Naive thymus-derived CD4-positive, alpha-beta T cell (primary cell): ENCODE measurements at regions of chr3 and their contacts with region 1.

Region 1: DNA sequence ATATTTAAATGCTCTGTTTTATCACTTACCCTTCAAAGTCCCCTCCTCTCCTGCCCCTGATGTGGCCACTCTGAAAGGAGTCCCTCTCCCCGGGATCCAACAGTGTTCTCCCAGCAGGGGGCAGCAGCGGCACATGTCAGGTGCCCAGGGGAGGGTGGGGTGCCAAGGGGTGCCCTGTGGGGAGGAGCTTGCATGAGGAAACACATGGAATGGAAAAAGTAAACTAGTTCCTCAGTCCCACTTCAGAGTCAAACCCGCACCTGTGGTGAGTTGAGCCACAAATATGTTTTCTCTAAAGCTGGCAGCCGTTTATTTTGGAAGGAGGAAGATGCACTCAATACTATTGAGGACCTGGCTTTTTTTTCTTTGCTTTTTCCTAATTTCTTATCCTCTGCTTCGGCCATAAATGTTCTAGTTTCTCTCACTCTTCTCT is 30.1 kb upstream of the NRROS start:
- DNase-seq: peak; percentile 78 to 93 (median 88)
- ATAC-seq: peak; percentile 96
- H3K4me3 ChIP-seq: no peak overlapping the region
- H3K4me3 Mint-ChIP-seq: peak overlapping the region; percentile 49 to 80 (median 74)
- H3K27ac ChIP-seq: peak overlapping the region; percentile 39
- H3K27ac Mint-ChIP-seq: peak overlapping the region; percentile 72 to 93 (median 88)
- H3K4me1 ChIP-seq: peaks cover 23 to 26% of the 10 kb centered on the region in 2 donors
- H3K4me1 Mint-ChIP-seq: peaks cover 28 to 50% (median 47%) of the 10 kb centered on the region in 7 donors
- H3K27me3 ChIP-seq: no peaks in the 10 kb centered on the region
- H3K27me3 Mint-ChIP-seq: peaks cover 0 to 5% (median 0%) of the 10 kb centered on the region in 5 donors

Region 2: GRCh38 chr3:196023947-196024346 is 585.4 kb before region 1 on chr3:
- CTCF ChIA-PET with region 1: no interaction called
- POLR2A ChIA-PET with region 1: no interaction called
- intact Hi-C with region 1: no loop called
- DNase-seq: no peak
- ATAC-seq: no peak
- H3K4me3 ChIP-seq: no peak overlapping the region
- H3K4me3 Mint-ChIP-seq: no peak overlapping the region
- H3K27ac ChIP-seq: no peak overlapping the region
- H3K27ac Mint-ChIP-seq: no peak overlapping the region
- H3K4me1 ChIP-seq: no peaks in the 10 kb centered on the region
- H3K4me1 Mint-ChIP-seq: no peaks in the 10 kb centered on the region
- H3K27me3 ChIP-seq: no peaks in the 10 kb centered on the region
- H3K27me3 Mint-ChIP-seq: peaks cover 0 to 19% (median 3%) of the 10 kb centered on the region in 5 donors

Region 3: DNA sequence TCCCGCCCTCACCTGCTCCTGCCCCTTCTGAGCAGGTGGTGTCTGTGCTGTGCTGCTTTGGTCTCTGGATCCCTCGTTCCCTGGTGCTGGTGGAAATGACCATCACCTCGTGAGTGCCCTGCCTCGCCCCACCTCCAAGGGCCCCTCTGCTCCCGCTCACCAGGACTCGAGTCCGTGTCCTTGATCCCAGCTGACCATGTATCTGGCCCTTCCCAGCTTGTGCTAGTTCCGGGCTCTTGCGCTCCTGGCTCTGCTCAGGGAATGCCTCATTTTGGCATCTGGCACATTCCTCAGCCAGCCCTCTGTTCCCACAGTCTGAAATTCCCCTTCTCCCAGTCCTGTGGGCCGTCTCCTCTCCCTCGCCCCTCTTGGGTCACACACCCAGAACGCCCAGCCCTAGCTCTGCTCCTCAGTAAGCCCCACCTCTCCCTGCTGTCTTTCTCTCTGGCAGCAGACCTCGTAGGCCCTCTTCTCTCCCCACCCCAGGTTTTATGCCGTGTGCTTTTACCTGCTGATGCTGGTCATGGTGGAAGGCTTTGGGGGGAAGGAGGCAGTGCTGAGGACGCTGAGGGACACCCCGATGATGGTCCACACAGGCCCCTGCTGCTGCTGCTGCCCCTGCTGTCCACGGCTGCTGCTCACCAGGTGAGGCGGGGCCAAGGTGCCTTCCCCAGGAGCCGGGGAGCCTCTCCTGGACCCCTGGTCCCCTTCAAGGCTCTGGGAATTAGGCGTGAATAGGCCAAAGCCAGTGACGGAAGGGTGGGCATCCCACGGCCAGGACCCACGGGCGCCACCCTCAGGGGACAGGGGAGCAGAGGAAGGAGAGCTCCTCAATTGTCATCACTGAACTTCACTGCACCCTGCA is 381.5 kb before region 1 on chr3:
- CTCF ChIA-PET with region 1: no interaction called
- POLR2A ChIA-PET with region 1: no interaction called
- intact Hi-C with region 1: no loop called
- DNase-seq: no peak
- ATAC-seq: no peak
- H3K4me3 ChIP-seq: no peak overlapping the region
- H3K4me3 Mint-ChIP-seq: peak overlapping the region in 1 of 10 donors; percentile 29
- H3K27ac ChIP-seq: no peak overlapping the region
- H3K27ac Mint-ChIP-seq: no peak overlapping the region
- H3K4me1 ChIP-seq: no peaks in the 10 kb centered on the region
- H3K4me1 Mint-ChIP-seq: peaks cover 0 to 3% (median 0%) of the 10 kb centered on the region in 7 donors
- H3K27me3 ChIP-seq: no peaks in the 10 kb centered on the region
- H3K27me3 Mint-ChIP-seq: peaks cover 0 to 4% (median 4%) of the 10 kb centered on the region in 5 donors

Region 4: DNA sequence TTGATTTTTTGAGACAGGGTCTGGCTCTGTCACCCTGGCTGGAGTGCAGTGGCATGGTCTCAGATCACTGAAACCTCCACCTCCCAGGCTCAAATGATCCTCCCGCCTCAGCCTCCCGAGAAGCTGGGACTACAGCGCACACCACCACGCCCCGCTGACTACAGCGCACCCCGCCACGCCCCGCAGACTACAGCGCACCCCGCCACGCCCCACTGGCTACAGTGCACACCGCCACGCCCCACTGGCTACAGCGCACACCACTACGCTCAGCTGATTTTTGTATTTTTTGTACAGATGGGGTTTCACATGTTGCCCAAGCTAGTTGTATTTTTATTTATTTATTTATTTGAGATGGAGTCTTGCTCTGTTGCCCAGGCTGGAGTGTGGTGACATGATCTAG is 357.4 kb before region 1 on chr3:
- CTCF ChIA-PET with region 1: no interaction called
- POLR2A ChIA-PET with region 1: no interaction called
- intact Hi-C with region 1: loop called in 1 of 2 experiments (anchors 1 kb)
- DNase-seq: no peak
- ATAC-seq: no peak
- H3K4me3 ChIP-seq: no peak overlapping the region
- H3K4me3 Mint-ChIP-seq: no peak overlapping the region
- H3K27ac ChIP-seq: no peak overlapping the region
- H3K27ac Mint-ChIP-seq: no peak overlapping the region
- H3K4me1 ChIP-seq: no peaks in the 10 kb centered on the region
- H3K4me1 Mint-ChIP-seq: peaks cover 0 to 8% (median 2%) of the 10 kb centered on the region in 7 donors
- H3K27me3 ChIP-seq: no peaks in the 10 kb centered on the region
- H3K27me3 Mint-ChIP-seq: no peaks in the 10 kb centered on the region

Region 5: DNA sequence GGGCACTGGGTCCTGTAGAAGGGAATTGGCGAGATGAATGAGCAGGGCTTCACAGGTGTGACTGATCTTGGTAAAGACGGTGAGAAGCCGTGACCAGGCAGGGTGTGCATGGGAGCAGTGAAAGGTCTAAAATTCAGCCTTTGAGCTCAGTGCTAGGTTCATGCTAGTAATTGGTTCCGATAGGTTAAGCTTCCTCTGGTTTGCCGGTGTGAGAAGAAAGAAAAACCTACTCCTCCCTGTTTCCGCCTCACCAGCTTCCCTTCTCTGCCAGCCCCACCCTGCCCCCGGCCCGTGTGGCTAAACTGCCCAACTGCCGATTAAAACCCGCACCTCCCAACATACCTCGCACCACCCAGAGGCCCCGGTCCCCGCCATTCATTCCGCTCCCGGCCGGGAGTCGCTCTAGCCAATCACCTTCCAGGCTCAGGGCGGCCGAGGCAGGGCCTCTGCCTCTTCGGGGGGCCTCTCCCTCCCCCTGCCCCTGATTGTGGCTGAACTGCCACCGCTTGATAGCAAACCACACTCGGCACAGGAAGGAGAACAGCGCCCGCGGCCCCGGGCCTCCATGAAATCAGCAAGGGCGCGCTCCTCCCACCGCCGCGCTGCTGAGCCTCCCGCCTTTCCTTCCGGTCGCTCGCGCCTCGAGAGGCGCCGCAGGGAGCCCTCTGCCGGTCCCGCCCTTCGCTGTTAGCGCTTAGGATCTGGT is 22.8 kb after region 1 on chr3:
- CTCF ChIA-PET with region 1: interaction called, 51 read pairs
- POLR2A ChIA-PET with region 1: interaction called, 46 read pairs
- intact Hi-C with region 1: loop called (anchors 1 kb)
- DNase-seq: peak; percentile 69 to 91 (median 88)
- ATAC-seq: peak; percentile 89
- H3K4me3 ChIP-seq: peak overlapping the region; percentile 48
- H3K4me3 Mint-ChIP-seq: peak overlapping the region; percentile 80 to 96 (median 90)
- H3K27ac ChIP-seq: peak overlapping the region; percentile 78
- H3K27ac Mint-ChIP-seq: peak overlapping the region; percentile 93 to 99 (median 97)
- H3K4me1 ChIP-seq: peaks cover 30 to 31% of the 10 kb centered on the region in 2 donors
- H3K4me1 Mint-ChIP-seq: peaks cover 31 to 74% (median 62%) of the 10 kb centered on the region in 7 donors
- H3K27me3 ChIP-seq: no peaks in the 10 kb centered on the region
- H3K27me3 Mint-ChIP-seq: no peaks in the 10 kb centered on the region

Region 6: DNA sequence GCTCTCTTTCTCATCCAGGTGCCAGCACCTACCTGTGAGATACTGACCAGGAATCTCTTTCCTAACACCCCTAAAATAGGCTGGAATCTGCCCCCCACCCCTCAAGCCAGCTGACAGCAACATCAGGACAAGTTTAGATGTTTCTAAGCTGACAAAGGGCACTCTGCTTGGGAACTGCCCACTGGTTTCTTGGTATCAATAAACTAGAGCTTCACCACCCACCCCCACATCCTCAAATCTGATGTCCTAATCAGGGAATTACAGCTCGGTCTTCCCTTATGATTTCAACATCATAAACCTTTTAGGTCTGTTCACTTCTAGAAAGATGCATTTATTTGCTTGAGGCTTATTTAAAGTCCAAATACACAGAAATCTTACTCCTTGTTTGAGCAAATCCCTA is 68.0 kb after region 1 on chr3:
- CTCF ChIA-PET with region 1: interaction called, 12 read pairs
- POLR2A ChIA-PET with region 1: interaction called, 3 read pairs
- intact Hi-C with region 1: no loop called
- DNase-seq: no peak
- ATAC-seq: no peak
- H3K4me3 ChIP-seq: no peak overlapping the region
- H3K4me3 Mint-ChIP-seq: peak overlapping the region in 1 of 10 donors; percentile 42
- H3K27ac ChIP-seq: no peak overlapping the region
- H3K27ac Mint-ChIP-seq: peak overlapping the region in 3 of 9 donors; percentile 22 to 51 (median 31)
- H3K4me1 ChIP-seq: peaks cover 0 to 11% of the 10 kb centered on the region in 2 donors
- H3K4me1 Mint-ChIP-seq: peaks cover 0 to 28% (median 15%) of the 10 kb centered on the region in 7 donors
- H3K27me3 ChIP-seq: no peaks in the 10 kb centered on the region
- H3K27me3 Mint-ChIP-seq: no peaks in the 10 kb centered on the region

Region 7: GRCh38 chr3:196694202-196694638 is 84.9 kb after region 1 on chr3:
- CTCF ChIA-PET with region 1: interaction called, 29 read pairs
- POLR2A ChIA-PET with region 1: interaction called, 4 read pairs
- intact Hi-C with region 1: loop called in 1 of 2 experiments (anchors 1 kb)
- DNase-seq: peak in 6 of 9 donors; percentile 18 to 55 (median 46)
- ATAC-seq: peak; percentile 78
- H3K4me3 ChIP-seq: no peak overlapping the region
- H3K4me3 Mint-ChIP-seq: no peak overlapping the region
- H3K27ac ChIP-seq: no peak overlapping the region
- H3K27ac Mint-ChIP-seq: peak overlapping the region in 3 of 9 donors; percentile 33 to 84 (median 65)
- H3K4me1 ChIP-seq: peaks cover 0 to 12% of the 10 kb centered on the region in 2 donors
- H3K4me1 Mint-ChIP-seq: peaks cover 0 to 14% (median 7%) of the 10 kb centered on the region in 7 donors
- H3K27me3 ChIP-seq: no peaks in the 10 kb centered on the region
- H3K27me3 Mint-ChIP-seq: no peaks in the 10 kb centered on the region

Region 8: GRCh38 chr3:196837819-196838420 is 228.6 kb after region 1 on chr3:
- CTCF ChIA-PET with region 1: no interaction called
- POLR2A ChIA-PET with region 1: no interaction called
- intact Hi-C with region 1: loop called (anchors 10 kb)
- DNase-seq: peak; percentile 37 to 73 (median 66)
- ATAC-seq: peak; percentile 95
- H3K4me3 ChIP-seq: no peak overlapping the region
- H3K4me3 Mint-ChIP-seq: no peak overlapping the region
- H3K27ac ChIP-seq: no peak overlapping the region
- H3K27ac Mint-ChIP-seq: peak overlapping the region in 2 of 9 donors; percentile 31 to 81
- H3K4me1 ChIP-seq: no peaks in the 10 kb centered on the region
- H3K4me1 Mint-ChIP-seq: peaks cover 0 to 6% (median 0%) of the 10 kb centered on the region in 7 donors
- H3K27me3 ChIP-seq: no peaks in the 10 kb centered on the region
- H3K27me3 Mint-ChIP-seq: no peaks in the 10 kb centered on the region

Region 9: GRCh38 chr3:196920733-196921132 is 311.4 kb after region 1 on chr3:
- CTCF ChIA-PET with region 1: no interaction called
- POLR2A ChIA-PET with region 1: no interaction called
- intact Hi-C with region 1: no loop called
- DNase-seq: no peak
- ATAC-seq: no peak
- H3K4me3 ChIP-seq: no peak overlapping the region
- H3K4me3 Mint-ChIP-seq: no peak overlapping the region
- H3K27ac ChIP-seq: no peak overlapping the region
- H3K27ac Mint-ChIP-seq: peak overlapping the region in 3 of 9 donors; percentile 0 to 34 (median 28)
- H3K4me1 ChIP-seq: no peaks in the 10 kb centered on the region
- H3K4me1 Mint-ChIP-seq: no peaks in the 10 kb centered on the region
- H3K27me3 ChIP-seq: no peaks in the 10 kb centered on the region
- H3K27me3 Mint-ChIP-seq: no peaks in the 10 kb centered on the region

Region 10: GRCh38 chr3:196969660-196970546 is 360.5 kb after region 1 on chr3:
- CTCF ChIA-PET with region 1: no interaction called
- POLR2A ChIA-PET with region 1: no interaction called
- intact Hi-C with region 1: loop called (anchors 1 kb)
- DNase-seq: peak; percentile 43 to 89 (median 66)
- ATAC-seq: peak; percentile 88
- H3K4me3 ChIP-seq: peak overlapping the region; percentile 48
- H3K4me3 Mint-ChIP-seq: peak overlapping the region; percentile 63 to 88 (median 82)
- H3K27ac ChIP-seq: no peak overlapping the region
- H3K27ac Mint-ChIP-seq: peak overlapping the region in 3 of 9 donors; percentile 32 to 53 (median 44)
- H3K4me1 ChIP-seq: no peaks in the 10 kb centered on the region
- H3K4me1 Mint-ChIP-seq: peaks cover 0 to 14% (median 6%) of the 10 kb centered on the region in 7 donors
- H3K27me3 ChIP-seq: no peaks in the 10 kb centered on the region
- H3K27me3 Mint-ChIP-seq: peaks cover 0 to 12% (median 4%) of the 10 kb centered on the region in 5 donors

Region 11: GRCh38 chr3:197050511-197050910 is 441.2 kb after region 1 on chr3:
- CTCF ChIA-PET with region 1: no interaction called
- POLR2A ChIA-PET with region 1: no interaction called
- intact Hi-C with region 1: no loop called
- DNase-seq: no peak
- ATAC-seq: no peak
- H3K4me3 ChIP-seq: no peak overlapping the region
- H3K4me3 Mint-ChIP-seq: no peak overlapping the region
- H3K27ac ChIP-seq: no peak overlapping the region
- H3K27ac Mint-ChIP-seq: peak overlapping the region in 3 of 9 donors; percentile 7 to 38 (median 33)
- H3K4me1 ChIP-seq: no peaks in the 10 kb centered on the region
- H3K4me1 Mint-ChIP-seq: peaks cover 0 to 3% (median 0%) of the 10 kb centered on the region in 7 donors
- H3K27me3 ChIP-seq: no peaks in the 10 kb centered on the region
- H3K27me3 Mint-ChIP-seq: no peaks in the 10 kb centered on the region